ENCODE measurements at regions of chr20 and their contacts with region 1.

Region 1: GRCh38 chr20:44733341-44734069 is 12.2 kb upstream of the KCNK15 start:
- DNase-seq: no peak

Region 2: GRCh38 chr20:44532259-44532980 is 201.1 kb before region 1 on chr20:
- intact Hi-C with region 1: loop called (anchors 10 kb)
- DNase-seq: no peak

Region 3: DNA sequence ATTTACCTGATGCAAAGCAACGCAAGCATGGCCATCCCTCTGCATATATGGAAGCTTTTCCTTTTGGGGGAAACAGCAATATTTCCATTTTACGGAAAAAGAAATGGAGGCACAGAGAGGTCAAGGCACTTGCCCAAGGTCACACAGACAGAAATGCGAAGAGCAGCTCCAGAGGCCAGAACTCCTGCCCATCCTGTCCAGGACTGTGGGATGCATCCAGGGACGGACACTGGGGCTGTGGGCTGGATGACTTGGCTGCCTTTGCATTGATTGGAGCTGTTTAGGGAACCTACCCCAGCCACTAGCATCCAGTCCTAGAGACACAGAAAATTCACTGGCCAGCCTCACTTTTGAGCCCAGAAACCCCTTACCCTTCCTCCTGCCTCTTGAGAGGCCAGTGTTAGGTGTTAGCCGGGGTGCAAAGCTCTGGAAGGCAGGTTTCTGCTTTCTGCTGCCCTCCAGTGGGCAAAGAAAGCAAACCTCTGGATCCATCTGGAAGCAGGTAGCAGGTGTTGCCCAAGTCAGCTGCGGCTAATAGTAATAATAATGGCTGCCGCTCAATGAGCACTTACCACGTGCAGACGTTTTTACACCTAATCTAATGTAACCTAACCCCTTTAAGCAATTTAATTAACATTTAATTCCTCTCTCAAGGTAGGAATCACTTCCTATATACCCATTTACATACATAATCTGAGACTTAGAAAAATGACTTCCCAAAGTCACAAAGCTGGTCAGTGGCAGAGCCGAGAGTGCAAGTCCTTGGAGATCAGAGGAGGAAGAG is 50.0 kb before region 1 on chr20:
- intact Hi-C with region 1: loop called (anchors 1 kb)
- DNase-seq: no peak

Region 4: GRCh38 chr20:44901974-44902373 is 168.5 kb after region 1 on chr20:
- intact Hi-C with region 1: no loop called
- DNase-seq: no peak

Measured in cardiac septum (tissue), 1 donor.